ENCODE measurements at regions of chr17 and their contacts with region 1.

Region 1: DNA sequence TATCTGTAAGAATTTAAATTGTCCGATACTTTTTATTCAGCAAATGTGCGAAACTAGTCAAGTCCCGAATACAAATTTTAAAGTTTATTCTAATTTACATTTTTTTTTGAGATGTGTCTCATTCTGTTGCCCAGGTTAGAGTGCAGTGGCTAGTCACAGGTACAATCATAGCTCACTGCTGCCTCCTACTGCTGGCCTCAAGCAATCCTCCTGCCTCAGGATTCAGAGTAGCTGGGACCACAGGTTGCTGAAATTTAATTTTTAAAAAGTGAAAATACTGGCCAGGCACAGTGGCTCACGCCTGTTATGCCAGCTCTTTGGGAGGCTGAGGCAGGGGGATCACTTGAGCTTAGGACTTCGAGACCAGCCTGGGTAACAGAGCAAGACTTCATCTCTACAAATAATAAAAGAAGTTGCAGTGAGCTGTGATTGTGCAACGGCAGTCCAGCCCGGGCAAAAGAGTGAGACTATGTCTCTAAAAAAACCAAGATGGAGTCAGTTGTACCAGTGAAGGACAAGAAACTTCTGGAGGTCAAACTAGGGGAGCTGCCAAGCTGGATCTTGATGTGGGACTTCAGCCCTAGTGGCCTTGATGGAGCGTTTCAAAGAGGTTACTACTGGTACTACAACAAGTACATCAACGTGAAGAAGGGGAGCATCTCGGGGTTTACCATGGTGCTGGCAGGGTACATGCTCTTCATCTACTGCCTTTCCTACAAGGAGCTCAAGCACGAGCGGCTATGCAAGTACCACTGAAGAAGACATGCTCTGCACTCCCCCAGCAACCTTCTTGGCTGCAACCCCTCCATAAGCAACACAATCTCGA is 5.6 kb downstream of the POLG2 start:
- DNase-seq: peak; percentile 25 to 53
- H3K4me3 ChIP-seq: no peak overlapping the region
- H3K27ac ChIP-seq: no peak overlapping the region
- H3K4me1 ChIP-seq: peaks cover 27% of the 10 kb centered on the region
- H3K27me3 ChIP-seq: no peaks in the 10 kb centered on the region
- CTCF ChIP-seq: peak; percentile 84

Region 2: GRCh38 chr17:64306850-64307463 is 184.3 kb before region 1 on chr17:
- CTCF ChIA-PET with region 1: no interaction called
- POLR2A ChIA-PET with region 1: no interaction called
- intact Hi-C with region 1: loop called (anchors 1 kb)
- DNase-seq: peak; percentile 62
- H3K4me3 ChIP-seq: no peak overlapping the region
- H3K27ac ChIP-seq: no peak overlapping the region
- H3K4me1 ChIP-seq: peaks cover 12% of the 10 kb centered on the region
- H3K27me3 ChIP-seq: no peaks in the 10 kb centered on the region
- CTCF ChIP-seq: peak; percentile 95

Measured in PC-9 (cell line).